Mammary epithelial cell (primary cell): ENCODE measurements at regions of chr2 and their contacts with region 1.

Region 1: DNA sequence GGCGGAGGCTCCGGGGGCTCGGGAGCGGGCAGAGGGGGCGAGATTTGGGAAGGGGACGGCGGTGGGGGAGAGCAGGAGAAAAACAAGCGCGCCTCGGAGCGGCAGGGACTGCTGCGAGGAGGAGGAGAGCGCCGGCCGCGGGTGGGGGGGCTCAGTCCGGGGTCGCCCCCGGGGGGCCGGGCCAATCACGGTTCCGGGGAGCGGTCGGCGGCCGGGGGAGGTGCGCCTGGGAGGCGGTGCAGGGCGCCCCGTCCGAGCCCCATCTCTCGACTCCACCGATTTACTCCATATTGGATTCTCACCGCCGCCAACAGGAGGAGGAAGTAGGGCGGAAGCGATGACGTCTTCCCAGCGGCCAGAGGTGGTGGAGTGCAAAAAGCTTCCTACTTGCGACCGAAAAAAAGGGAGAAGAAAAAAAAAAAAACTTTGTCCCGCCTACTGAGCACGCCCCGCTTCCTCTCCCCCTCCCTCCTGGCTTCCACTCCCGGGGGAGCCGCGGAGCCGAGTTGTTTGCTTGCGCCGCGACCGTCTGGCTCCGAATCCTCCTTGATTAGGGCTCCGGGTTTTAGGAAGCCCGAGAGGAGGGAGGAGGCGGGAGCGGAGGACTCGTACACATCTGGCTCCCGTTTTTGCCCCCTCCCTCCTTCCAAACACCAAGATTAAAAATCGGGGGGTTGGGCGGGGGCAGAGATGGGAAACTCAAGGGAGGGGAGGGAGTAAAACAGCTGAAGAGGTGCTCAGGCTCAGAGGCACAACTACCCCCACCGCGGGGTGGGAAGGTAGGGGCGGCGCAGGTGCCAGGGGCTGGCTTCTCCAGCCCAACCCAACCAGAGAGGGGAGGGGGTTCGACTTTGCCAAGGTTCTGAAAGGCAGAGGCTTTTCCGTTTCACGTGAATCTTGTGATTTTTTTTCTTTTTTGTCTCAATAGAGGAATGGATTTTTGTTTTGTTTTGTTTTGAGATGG is at the start of gene SPRED2:
- DNase-seq: peak; percentile 97
- H3K4me3 ChIP-seq: peak within 1 kb of the TSS; percentile 69 to 93 (median 92)
- H3K27ac ChIP-seq: peak within 1 kb of the TSS; percentile 59
- H3K4me1 ChIP-seq: peaks cover 30% of the 10 kb centered on the region
- H3K27me3 ChIP-seq: no peaks in the 10 kb centered on the region
- CTCF ChIP-seq: peak in 1 of 2 donors; percentile 19
- total RNA-seq, gene SPRED2: 14.7 to 60.6 TPM

Region 2: DNA sequence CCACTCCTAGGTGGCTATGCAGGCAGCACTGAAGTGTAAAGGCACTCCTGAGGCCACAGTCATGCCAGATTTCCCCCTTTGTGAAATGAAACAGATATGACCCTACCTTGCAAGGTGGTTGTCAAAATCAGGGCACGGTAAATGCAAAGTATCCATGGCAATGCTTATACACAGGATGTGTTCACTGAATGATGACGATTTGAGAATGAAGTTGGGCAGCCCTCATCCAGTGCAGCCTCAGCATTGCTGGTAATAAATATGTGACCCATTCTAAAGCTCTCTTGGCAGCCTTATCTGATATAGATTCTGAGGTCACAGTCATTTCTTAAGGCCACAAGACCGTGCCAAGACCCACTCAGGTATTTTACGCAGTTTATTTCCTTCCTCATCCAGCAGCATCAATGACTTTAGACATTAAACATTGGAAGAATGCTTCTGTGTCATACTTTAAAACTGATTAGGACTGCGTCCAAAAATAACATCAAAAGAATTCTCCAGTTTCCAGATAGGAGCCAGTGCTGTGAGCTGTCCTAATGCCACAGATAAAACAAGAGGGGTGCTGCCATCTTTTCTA is 653.3 kb before region 1 on chr2:
- CTCF ChIA-PET with region 1: no interaction called
- dilution Hi-C with region 1: no loop called
- in situ Hi-C with region 1: no loop called
- intact Hi-C with region 1: no loop called
- DNase-seq: peak; percentile 66
- H3K4me3 ChIP-seq: no peak overlapping the region
- H3K27ac ChIP-seq: no peak overlapping the region
- H3K4me1 ChIP-seq: peaks cover 12% of the 10 kb centered on the region
- H3K27me3 ChIP-seq: no peaks in the 10 kb centered on the region
- CTCF ChIP-seq: no peak

Region 3: GRCh38 chr2:65129826-65130663 is 302.5 kb before region 1 on chr2 and contains the start of gene RAB1A:
- CTCF ChIA-PET with region 1: no interaction called
- dilution Hi-C with region 1: no loop called
- in situ Hi-C with region 1: no loop called
- intact Hi-C with region 1: loop called (anchors 10 kb)
- DNase-seq: peak; percentile 99
- H3K4me3 ChIP-seq: peak within 1 kb of the TSS; percentile 92 to 98 (median 93)
- H3K27ac ChIP-seq: peak within 1 kb of the TSS; percentile 92
- H3K4me1 ChIP-seq: peaks cover 6% of the 10 kb centered on the region
- H3K27me3 ChIP-seq: no peaks in the 10 kb centered on the region
- CTCF ChIP-seq: no peak
- total RNA-seq, gene RAB1A: 76.7 to 158 TPM

Region 4: GRCh38 chr2:65198737-65199136 is 233.8 kb before region 1 on chr2:
- CTCF ChIA-PET with region 1: no interaction called
- dilution Hi-C with region 1: no loop called
- in situ Hi-C with region 1: no loop called
- intact Hi-C with region 1: no loop called
- DNase-seq: no peak
- H3K4me3 ChIP-seq: no peak overlapping the region
- H3K27ac ChIP-seq: no peak overlapping the region
- H3K4me1 ChIP-seq: no peaks in the 10 kb centered on the region
- H3K27me3 ChIP-seq: no peaks in the 10 kb centered on the region
- CTCF ChIP-seq: no peak

Region 5: DNA sequence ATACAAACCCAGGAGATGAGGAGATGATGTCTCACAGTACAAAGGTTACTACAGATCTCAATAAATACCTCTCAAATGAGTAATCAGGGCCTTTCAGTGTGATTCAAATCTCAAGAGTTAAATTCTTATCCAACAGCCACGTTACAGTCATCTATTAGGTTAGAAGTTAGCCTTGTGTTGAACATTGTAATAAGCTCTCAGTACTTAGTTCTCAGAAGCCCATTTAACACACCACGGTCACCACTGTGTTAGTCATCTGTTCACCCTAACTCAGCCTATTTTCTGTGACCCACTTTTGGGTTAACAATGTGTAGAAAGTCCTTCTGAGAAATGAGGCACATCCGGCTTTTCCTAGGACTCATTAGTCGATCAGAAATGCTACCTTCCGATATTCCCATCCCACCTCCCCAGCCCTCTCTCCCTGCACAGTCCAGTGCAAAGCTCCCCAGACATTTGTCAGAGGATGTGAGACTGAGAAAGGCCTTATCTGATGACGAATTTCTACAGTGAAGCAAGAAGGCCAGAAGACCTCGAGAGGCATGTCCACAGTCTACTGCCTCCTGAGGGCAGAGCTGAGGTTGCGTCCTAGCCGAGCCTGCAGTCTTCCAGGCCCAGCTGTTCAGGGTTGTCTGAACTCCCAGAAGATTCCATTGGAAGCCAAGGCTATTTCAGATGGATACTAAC is 112.3 kb before region 1 on chr2:
- CTCF ChIA-PET with region 1: no interaction called
- dilution Hi-C with region 1: no loop called
- in situ Hi-C with region 1: no loop called
- intact Hi-C with region 1: loop called (anchors 1 kb)
- DNase-seq: peak; percentile 94
- H3K4me3 ChIP-seq: no peak overlapping the region
- H3K27ac ChIP-seq: peak overlapping the region; percentile 77
- H3K4me1 ChIP-seq: peaks cover 58% of the 10 kb centered on the region
- H3K27me3 ChIP-seq: no peaks in the 10 kb centered on the region
- CTCF ChIP-seq: peak; percentile 45 to 54

Region 6: GRCh38 chr2:65382776-65383357 is 49.6 kb before region 1 on chr2:
- CTCF ChIA-PET with region 1: interaction called, 7 read pairs
- dilution Hi-C with region 1: loop called (anchors 10 kb)
- in situ Hi-C with region 1: loop called in 1 of 2 experiments (anchors 5 kb)
- intact Hi-C with region 1: loop called (anchors 1 kb)
- DNase-seq: peak; percentile 99
- H3K4me3 ChIP-seq: no peak overlapping the region
- H3K27ac ChIP-seq: peak overlapping the region; percentile 85
- H3K4me1 ChIP-seq: peaks cover 84% of the 10 kb centered on the region
- H3K27me3 ChIP-seq: no peaks in the 10 kb centered on the region
- CTCF ChIP-seq: peak; percentile 32 to 63

Region 7: DNA sequence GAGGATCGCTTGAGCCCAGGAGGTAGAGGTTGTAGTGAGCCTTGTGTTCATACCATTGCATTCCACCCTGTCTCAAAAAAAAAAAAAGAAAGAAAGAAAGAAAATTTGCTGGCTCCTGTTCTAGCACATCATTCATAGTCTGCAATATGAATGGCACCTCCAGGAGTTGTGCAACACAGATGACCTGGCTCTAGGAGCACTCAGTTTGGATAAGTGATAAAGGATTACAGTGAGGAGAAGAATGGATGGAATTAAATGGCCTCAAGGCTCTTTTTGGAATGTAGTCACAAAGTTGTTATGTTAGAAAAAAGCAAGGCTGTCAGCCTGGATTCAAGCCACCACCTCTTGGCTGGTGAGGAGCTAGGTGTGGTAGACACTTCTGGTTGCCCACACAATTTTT is 21.4 kb after region 1 on chr2:
- CTCF ChIA-PET with region 1: interaction called, 3 read pairs
- dilution Hi-C with region 1: no loop called
- in situ Hi-C with region 1: no loop called
- intact Hi-C with region 1: loop called (anchors 2 kb)
- DNase-seq: peak; percentile 55
- H3K4me3 ChIP-seq: no peak overlapping the region
- H3K27ac ChIP-seq: no peak overlapping the region
- H3K4me1 ChIP-seq: peaks cover 39% of the 10 kb centered on the region
- H3K27me3 ChIP-seq: no peaks in the 10 kb centered on the region
- CTCF ChIP-seq: no peak

Region 8: GRCh38 chr2:65554765-65555591 is 122.5 kb after region 1 on chr2:
- CTCF ChIA-PET with region 1: no interaction called
- dilution Hi-C with region 1: no loop called
- in situ Hi-C with region 1: no loop called
- intact Hi-C with region 1: loop called (anchors 1 kb)
- DNase-seq: peak; percentile 40
- H3K4me3 ChIP-seq: no peak overlapping the region
- H3K27ac ChIP-seq: no peak overlapping the region
- H3K4me1 ChIP-seq: peaks cover 6% of the 10 kb centered on the region
- H3K27me3 ChIP-seq: no peaks in the 10 kb centered on the region
- CTCF ChIP-seq: no peak